Calu3 (cell line): ENCODE measurements at regions of chr4 and their contacts with region 1.

Region 1: GRCh38 chr4:72909461-72909860 is 160.1 kb downstream of the COX18 start:
- DNase-seq: peak; percentile 4
- H3K4me3 Mint-ChIP-seq: no peak overlapping the region
- H3K27ac Mint-ChIP-seq: no peak overlapping the region
- H3K4me1 Mint-ChIP-seq: no peaks in the 10 kb centered on the region
- H3K27me3 Mint-ChIP-seq: peaks cover 14% of the 10 kb centered on the region
- CTCF ChIP-seq: no peak

Region 2: DNA sequence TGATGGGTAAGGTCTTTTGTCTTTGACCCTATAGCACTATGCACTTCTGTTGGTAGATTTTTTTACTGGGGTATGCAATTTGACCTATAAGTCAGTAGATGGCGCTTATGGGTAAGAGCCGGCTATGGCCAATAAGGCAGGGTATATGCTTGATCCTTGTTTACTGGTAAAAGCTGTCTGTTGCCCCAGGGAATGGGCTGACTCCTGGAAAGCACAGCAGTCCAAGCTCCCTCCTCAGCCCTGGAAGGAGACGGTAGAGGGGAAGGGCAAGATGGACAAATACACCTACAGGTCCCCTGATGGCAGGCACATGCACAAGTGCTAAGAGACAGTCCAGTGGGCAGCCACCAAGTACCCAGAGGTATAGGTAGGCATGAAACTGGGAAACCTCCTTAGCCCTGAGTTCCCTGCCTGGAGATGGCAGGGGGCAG is 404.1 kb before region 1 on chr4:
- CTCF ChIA-PET with region 1: no interaction called
- intact Hi-C with region 1: loop called (anchors 2 kb)
- DNase-seq: peak; percentile 2
- H3K4me3 Mint-ChIP-seq: no peak overlapping the region
- H3K27ac Mint-ChIP-seq: no peak overlapping the region
- H3K4me1 Mint-ChIP-seq: no peaks in the 10 kb centered on the region
- H3K27me3 Mint-ChIP-seq: peaks cover 13% of the 10 kb centered on the region
- CTCF ChIP-seq: peak; percentile 28